ENCODE measurements at regions of chr14 and their contacts with region 1.

Region 1: GRCh38 chr14:35404449-35405303 is at the start of gene NFKBIA:
- DNase-seq: peak; percentile 69 to 88 (median 74)
- ATAC-seq: peak; percentile 90
- H3K4me3 ChIP-seq: peak within 1 kb of the TSS; percentile 89
- H3K27ac ChIP-seq: peak within 1 kb of the TSS; percentile 96
- H3K4me1 ChIP-seq: peaks cover 23 to 28% of the 10 kb centered on the region in 2 experiments
- H3K27me3 ChIP-seq: no peaks in the 10 kb centered on the region
- CTCF ChIP-seq: peak; percentile 44 to 96 (median 71); a peak in 5 of 6 replicates
- EP300 ChIP-seq: no peak
- POLR2A ChIP-seq: peak; percentile 75
- RAD21 ChIP-seq: peak; percentile 49 to 53; a peak in 3 of 4 replicates
- polyA plus RNA-seq, gene NFKBIA: 6.9 to 8.8 TPM

Region 2: DNA sequence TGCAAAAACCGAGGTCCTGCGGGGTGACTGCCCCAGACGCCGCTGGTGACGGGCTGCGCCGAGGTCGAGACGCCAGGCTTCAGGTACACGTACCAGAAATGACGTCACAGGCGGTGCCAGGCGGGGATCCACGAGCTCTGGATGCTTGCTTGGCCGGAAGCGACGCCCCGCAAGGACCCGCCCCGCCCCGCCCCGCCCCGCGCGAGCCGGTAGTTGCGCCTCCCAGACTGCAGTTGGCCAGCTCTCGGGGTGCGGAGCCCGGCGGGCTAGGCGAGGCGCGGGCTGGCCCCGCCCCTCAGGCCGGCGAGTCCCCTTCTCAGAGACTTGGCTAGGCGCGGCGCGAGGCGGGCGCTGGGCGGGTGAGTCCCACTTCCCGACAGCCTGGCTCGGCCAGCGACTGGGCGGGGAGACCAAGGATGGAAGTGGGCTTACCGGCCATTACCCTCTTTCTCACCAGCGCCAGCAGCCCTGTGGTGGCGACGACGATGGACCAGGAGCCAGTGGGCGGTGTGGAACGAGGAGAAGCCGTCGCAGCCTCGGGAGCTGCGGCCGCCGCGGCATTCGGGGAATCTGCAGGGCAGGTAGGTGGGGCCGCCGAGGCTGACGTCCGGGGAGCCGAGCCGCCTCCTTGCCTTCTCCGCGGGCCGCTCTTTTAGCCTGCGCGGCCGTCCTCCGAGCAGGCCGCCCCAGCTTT is 358.5 kb before region 1 on chr14 and contains the start of gene FAM177A1:
- CTCF ChIA-PET with region 1: no interaction called
- POLR2A ChIA-PET with region 1: interaction called, 3 read pairs
- in situ Hi-C with region 1: no loop called
- intact Hi-C with region 1: loop called (anchors 10 kb)
- DNase-seq: peak; percentile 92 to 96 (median 93)
- ATAC-seq: peak; percentile 96
- H3K4me3 ChIP-seq: peak within 1 kb of the TSS; percentile 69
- H3K27ac ChIP-seq: peak within 1 kb of the TSS; percentile 86
- H3K4me1 ChIP-seq: peaks cover 9 to 16% of the 10 kb centered on the region in 2 experiments; a peak in 4 of 5 replicates
- H3K27me3 ChIP-seq: no peaks in the 10 kb centered on the region
- CTCF ChIP-seq: no peak
- EP300 ChIP-seq: no peak
- POLR2A ChIP-seq: peak; percentile 88
- RAD21 ChIP-seq: no peak
- polyA plus RNA-seq, gene FAM177A1: 7.7 to 12.1 TPM

Region 3: DNA sequence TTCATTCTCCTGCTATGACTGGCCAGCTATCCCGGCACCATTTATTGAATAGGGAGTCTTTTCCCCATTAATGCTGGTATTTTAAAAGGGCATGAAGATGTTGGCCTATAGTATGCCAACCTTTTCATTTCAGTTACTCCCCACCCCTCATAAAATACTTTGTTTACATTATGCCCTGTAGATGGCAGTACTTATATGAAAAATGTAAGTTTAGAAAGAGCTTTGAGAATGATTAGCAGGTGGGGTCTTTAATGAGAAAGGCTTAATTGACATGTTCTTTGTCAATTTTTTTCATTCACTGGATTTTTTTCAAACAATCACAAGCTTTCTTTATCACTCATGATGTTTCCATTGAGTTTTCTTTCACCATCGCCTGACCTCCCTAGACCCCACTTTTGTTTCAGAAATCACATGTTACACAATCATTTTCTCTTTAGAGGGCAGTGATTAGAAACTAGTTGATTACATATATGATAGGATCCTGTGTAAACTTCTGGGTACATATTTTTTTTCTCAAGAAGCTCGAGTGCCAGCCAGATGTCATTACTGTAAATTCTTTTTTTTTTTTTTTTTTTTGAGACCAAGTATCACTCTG is 175.1 kb before region 1 on chr14:
- CTCF ChIA-PET with region 1: interaction called, 13 read pairs
- POLR2A ChIA-PET with region 1: interaction called, 5 read pairs
- in situ Hi-C with region 1: no loop called
- intact Hi-C with region 1: loop called (anchors 2 kb)
- DNase-seq: peak; percentile 3 to 14 (median 14)
- ATAC-seq: no peak
- H3K4me3 ChIP-seq: no peak overlapping the region
- H3K27ac ChIP-seq: no peak overlapping the region
- H3K4me1 ChIP-seq: no peaks in the 10 kb centered on the region
- H3K27me3 ChIP-seq: no peaks in the 10 kb centered on the region
- CTCF ChIP-seq: peak; percentile 5 to 49 (median 29); a peak in 3 of 6 replicates
- EP300 ChIP-seq: no peak
- POLR2A ChIP-seq: no peak
- RAD21 ChIP-seq: peak; percentile 56 to 60

Region 4: DNA sequence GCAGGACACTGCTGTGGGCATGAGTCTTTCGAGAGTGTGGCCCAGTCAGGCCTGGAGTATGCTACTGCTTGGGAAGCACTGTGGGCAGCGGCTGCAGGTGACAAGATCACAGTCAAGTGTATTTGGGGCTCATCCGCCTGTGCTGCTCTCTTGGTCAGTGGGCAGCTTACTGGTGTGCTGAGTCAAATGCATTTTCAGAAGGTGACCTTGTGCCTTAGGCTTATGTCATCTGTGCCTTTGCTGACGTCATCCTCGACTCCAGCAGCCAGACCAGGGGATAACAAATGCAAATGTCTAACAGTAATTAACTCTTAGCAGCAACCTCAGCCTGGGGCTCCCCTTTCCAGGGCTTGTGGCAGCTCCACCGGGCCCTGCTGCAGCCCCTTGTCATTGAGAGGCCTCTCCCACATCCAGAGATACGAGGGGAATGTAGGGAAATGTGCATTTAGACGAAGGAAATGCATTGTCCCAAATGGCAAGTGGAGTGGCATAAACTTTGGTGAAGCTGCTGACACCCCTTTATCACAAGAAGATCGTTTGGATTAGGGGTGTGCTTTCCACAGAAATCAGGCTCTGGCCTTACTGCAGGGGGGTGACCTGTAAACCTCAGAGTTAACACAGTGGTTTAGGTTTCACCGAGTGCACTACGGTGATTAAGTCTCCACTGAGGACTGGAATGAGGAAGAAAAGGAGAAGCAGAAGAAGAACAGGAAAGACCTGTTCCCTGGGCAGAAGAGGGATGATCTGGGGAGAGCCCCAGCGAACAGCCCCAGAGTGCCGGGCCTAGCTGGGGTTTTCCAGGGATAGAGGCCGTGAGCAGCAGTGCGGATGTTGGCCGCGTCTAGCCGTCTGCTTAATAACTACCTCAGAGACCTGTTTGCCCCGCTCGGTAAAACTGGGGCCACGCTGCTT is 72.8 kb before region 1 on chr14:
- CTCF ChIA-PET with region 1: interaction called, 3 read pairs
- POLR2A ChIA-PET with region 1: interaction called, 5 read pairs
- in situ Hi-C with region 1: no loop called
- intact Hi-C with region 1: loop called (anchors 5 kb)
- DNase-seq: peak in 3 of 4 experiments; percentile 39 to 66 (median 44)
- ATAC-seq: peak; percentile 45
- H3K4me3 ChIP-seq: no peak overlapping the region
- H3K27ac ChIP-seq: peak overlapping the region; percentile 51; the same call in 1 of the 3 replicates
- H3K4me1 ChIP-seq: peaks cover 35 to 44% of the 10 kb centered on the region in 2 experiments; a peak in 4 of 5 replicates
- H3K27me3 ChIP-seq: no peaks in the 10 kb centered on the region
- CTCF ChIP-seq: no peak
- EP300 ChIP-seq: no peak
- POLR2A ChIP-seq: no peak
- RAD21 ChIP-seq: no peak

Region 5: DNA sequence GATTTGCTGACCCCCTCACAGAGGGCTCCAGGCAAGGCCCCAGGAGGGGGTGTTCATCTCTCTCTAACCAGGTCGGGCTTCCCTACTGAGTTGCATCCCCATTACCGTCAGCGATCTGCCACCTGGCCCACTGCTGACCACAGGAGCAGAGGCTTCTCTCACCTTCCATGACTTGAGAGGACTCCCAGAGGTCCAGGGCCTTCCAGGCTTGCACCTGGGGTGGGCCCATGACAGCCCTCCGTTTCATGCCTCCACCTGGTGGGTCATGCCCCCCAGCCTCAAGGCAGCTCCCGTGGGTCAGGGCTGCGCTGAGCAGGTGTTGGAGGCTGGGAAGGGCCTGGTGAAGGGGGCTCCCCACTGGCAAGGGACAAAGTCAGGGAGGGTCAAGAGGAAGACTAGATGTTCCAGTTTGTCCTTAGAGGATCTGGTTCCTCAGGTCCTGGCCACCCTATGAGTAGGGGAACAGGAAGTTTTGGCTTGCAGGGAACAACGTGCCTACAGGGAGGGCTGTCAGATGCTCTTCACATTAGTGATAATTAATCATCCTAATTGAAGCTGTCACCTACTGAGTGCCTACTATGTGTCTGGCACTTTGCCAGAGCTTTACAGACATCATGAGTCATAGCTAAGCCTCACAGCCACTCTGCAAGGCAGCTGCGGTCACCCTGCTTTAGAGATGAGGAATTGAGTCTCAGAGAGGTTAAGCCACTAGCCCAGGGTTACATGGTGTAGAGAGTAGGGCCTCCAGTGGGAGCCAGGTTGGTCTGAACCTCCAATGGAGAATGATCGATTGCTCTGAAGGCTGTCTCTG is 13.9 kb before region 1 on chr14:
- CTCF ChIA-PET with region 1: no interaction called
- POLR2A ChIA-PET with region 1: interaction called, 49 read pairs
- in situ Hi-C with region 1: no loop called
- intact Hi-C with region 1: no loop called
- DNase-seq: peak; percentile 56 to 87 (median 62)
- ATAC-seq: peak; percentile 79
- H3K4me3 ChIP-seq: no peak overlapping the region
- H3K27ac ChIP-seq: peak overlapping the region; percentile 53; the same call in 2 of the 3 replicates
- H3K4me1 ChIP-seq: peaks cover 21 to 31% of the 10 kb centered on the region in 2 experiments; a peak in 4 of 5 replicates
- H3K27me3 ChIP-seq: no peaks in the 10 kb centered on the region
- CTCF ChIP-seq: no peak
- EP300 ChIP-seq: peak; percentile 21; the same call in 1 of the 2 replicates
- POLR2A ChIP-seq: no peak
- RAD21 ChIP-seq: peak in 1 of 2 experiments; percentile 26; a peak in 1 of 4 replicates

Region 6: GRCh38 chr14:35438910-35439713 is 34.4 kb after region 1 on chr14:
- CTCF ChIA-PET with region 1: no interaction called
- POLR2A ChIA-PET with region 1: no interaction called
- in situ Hi-C with region 1: no loop called
- intact Hi-C with region 1: no loop called
- DNase-seq: peak in 2 of 4 experiments; percentile 9 to 16
- ATAC-seq: peak; percentile 73
- H3K4me3 ChIP-seq: no peak overlapping the region
- H3K27ac ChIP-seq: no peak overlapping the region
- H3K4me1 ChIP-seq: peaks cover 0 to 3% of the 10 kb centered on the region in 2 experiments; a peak in 1 of 5 replicates
- H3K27me3 ChIP-seq: no peaks in the 10 kb centered on the region
- CTCF ChIP-seq: peak; percentile 41 to 59 (median 56); a peak in 4 of 6 replicates
- EP300 ChIP-seq: no peak
- POLR2A ChIP-seq: no peak
- RAD21 ChIP-seq: no peak

Region 7: DNA sequence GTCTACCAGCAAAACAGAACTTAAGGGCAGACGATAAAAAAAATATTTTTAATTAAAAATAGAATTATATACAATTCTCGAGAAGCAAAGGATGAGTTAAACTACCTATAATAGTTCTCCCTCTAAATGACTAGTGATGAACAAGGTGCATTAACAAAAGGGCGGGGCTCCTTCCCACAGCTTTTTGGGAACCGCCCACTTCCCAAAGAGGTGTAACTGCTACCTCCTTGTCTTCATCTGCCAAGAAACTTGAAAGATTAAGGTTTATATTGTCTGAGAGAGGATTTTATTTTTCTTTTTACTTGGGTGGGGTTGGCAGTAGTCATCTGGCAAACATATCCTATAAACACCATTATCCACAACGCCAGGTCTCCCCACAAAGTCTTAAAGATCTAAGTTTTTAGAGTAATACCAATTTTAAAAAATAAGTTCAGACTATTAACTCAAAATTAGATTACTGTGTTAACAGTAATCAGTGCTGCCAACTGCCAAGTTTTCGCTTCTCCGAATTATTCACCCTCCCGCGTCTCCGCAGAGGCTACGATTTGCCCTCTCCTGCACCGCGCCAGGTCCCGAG is 403.5 kb after region 1 on chr14:
- CTCF ChIA-PET with region 1: no interaction called
- POLR2A ChIA-PET with region 1: no interaction called
- in situ Hi-C with region 1: no loop called
- intact Hi-C with region 1: no loop called
- DNase-seq: peak; percentile 9 to 48 (median 31)
- ATAC-seq: peak; percentile 13; the same call in 1 of the 3 replicates
- H3K4me3 ChIP-seq: peak overlapping the region; percentile 63
- H3K27ac ChIP-seq: peak overlapping the region; percentile 64; the same call in 2 of the 3 replicates
- H3K4me1 ChIP-seq: peaks cover 5 to 6% of the 10 kb centered on the region in 2 experiments; a peak in 3 of 5 replicates
- H3K27me3 ChIP-seq: no peaks in the 10 kb centered on the region
- CTCF ChIP-seq: no peak
- EP300 ChIP-seq: no peak
- POLR2A ChIP-seq: no peak
- RAD21 ChIP-seq: no peak

Measured in K562 (cell line).